ENCODE measurements at regions of chr1 and their contacts with region 1.

Region 1: GRCh38 chr1:16613185-16614147 is at the start of gene NBPF1:
- DNase-seq: peak; percentile 97 to 99
- ATAC-seq: peak; percentile 97
- H3K4me3 ChIP-seq: peak within 1 kb of the TSS; percentile 46 to 56
- H3K27ac ChIP-seq: peak within 1 kb of the TSS in 1 of 2 donors; percentile 48
- H3K4me1 ChIP-seq: no peaks in the 10 kb centered on the region
- H3K27me3 ChIP-seq: no peaks in the 10 kb centered on the region
- total RNA-seq, gene NBPF1: 15.5 to 55.0 TPM

Region 2: DNA sequence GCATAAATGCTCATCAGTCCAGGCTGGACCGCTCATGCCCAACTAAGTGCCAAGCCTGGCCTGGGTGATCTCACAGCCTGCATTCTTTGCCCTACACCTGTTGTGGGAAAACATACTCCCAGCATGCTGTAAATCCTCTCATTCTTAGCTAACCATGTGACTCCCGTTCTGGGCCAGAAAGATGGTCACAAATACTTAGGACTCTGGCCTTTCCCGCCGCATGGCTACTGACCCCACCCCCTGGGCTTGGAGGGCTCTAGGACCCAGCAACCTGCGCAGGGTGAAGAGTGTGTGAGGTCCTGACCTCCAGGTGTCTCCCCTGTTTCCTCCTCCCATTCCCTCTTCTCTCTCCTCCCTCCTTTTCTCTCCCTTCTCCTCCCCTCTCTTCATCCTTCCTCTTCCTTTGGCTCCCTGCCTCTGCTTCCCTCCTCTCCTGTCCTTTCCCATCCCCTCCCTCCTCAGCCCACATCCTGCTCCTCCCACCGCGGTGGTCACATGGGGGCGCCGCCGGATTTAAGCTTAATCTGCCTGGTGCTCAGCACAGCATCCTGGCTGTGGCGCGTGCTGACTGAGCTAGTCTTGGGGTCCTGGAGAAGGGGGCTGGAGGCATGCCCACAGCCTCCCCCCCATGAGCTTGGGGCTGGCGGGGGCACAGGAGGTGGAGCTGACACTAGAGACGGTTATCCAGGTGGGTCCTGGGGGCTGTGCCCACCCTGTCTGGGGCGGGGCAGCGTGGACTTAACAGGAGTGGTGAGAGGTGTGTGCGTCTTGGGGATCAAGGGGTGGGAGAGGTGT is 308.1 kb after region 1 on chr1 and contains the start of gene CROCC:
- intact Hi-C with region 1: loop called in 1 of 2 experiments (anchors 10 kb)
- DNase-seq: peak; percentile 45 to 78
- ATAC-seq: no peak
- H3K4me3 ChIP-seq: no peak within 1 kb of the TSS
- H3K27ac ChIP-seq: no peak within 1 kb of the TSS
- H3K4me1 ChIP-seq: no peaks in the 10 kb centered on the region
- H3K27me3 ChIP-seq: no peaks in the 10 kb centered on the region
- total RNA-seq, gene CROCC: 18.6 to 34.1 TPM

Measured in aorta (tissue), 5 donors.